ENCODE measurements at regions of chr6 and their contacts with region 1.

Region 1: GRCh38 chr6:31619805-31620585 is 520 bp upstream of the PRRC2A start:
- DNase-seq: peak; percentile 98
- ATAC-seq: peak; percentile 82
- H3K4me3 Mint-ChIP-seq: peak overlapping the region; percentile 95
- H3K27ac Mint-ChIP-seq: peak overlapping the region; percentile 97
- H3K4me1 Mint-ChIP-seq: peaks cover 52% of the 10 kb centered on the region
- H3K27me3 Mint-ChIP-seq: no peaks in the 10 kb centered on the region

Region 2: GRCh38 chr6:31426395-31427354 is 193.3 kb before region 1 on chr6:
- CTCF ChIA-PET with region 1: no interaction called
- POLR2A ChIA-PET with region 1: no interaction called
- intact Hi-C with region 1: no loop called
- DNase-seq: no peak
- ATAC-seq: no peak
- H3K4me3 Mint-ChIP-seq: no peak overlapping the region
- H3K27ac Mint-ChIP-seq: no peak overlapping the region
- H3K4me1 Mint-ChIP-seq: no peaks in the 10 kb centered on the region
- H3K27me3 Mint-ChIP-seq: peaks cover 2% of the 10 kb centered on the region

Region 3: DNA sequence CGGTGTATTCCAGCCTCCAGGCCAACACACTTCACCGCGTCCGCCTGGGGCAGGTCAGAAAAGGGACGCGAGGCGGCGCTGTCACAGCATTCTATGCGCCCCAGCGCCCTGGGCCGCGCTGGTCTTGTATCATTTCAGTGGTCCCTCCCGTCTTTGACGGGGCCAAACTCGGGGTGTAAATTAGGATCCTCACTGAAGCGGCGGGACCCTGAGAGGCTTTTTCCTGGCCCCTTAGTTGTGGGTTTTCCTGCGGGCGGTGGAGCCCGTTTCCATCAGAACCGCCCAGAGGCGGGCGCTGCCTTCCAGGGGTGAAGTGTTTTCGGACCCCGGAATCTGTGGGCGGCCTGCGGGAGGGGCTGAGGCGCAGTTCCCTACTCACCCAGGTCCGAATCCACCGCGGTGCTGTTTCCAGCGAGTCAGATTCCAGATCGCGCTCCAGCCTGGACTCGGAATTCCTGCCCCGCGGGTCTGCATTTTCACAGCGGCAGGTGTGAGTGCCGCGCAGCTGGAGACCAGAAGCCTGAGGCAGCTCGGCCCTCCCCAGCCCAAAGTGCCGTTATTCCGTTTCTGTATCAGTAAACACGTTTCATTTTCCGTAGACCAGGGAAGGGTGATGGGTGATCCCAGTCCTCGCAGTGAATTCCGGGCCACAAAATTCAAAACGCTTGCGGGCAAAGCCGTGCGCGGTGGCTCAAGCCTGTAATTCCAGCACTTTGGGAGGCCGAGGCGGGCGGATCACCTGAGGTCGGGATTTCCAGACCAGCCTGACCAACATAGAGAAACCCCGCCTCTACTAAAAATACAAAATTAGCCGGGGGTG is 125.9 kb before region 1 on chr6:
- CTCF ChIA-PET with region 1: interaction called, 3 read pairs
- POLR2A ChIA-PET with region 1: no interaction called
- intact Hi-C with region 1: loop called in 1 of 2 experiments (anchors 1 kb)
- DNase-seq: peak; percentile 91
- ATAC-seq: peak; percentile 58
- H3K4me3 Mint-ChIP-seq: peak overlapping the region; percentile 79
- H3K27ac Mint-ChIP-seq: peak overlapping the region; percentile 90
- H3K4me1 Mint-ChIP-seq: peaks cover 43% of the 10 kb centered on the region
- H3K27me3 Mint-ChIP-seq: no peaks in the 10 kb centered on the region

Region 4: GRCh38 chr6:31597006-31597405 is 23.0 kb before region 1 on chr6:
- CTCF ChIA-PET with region 1: interaction called, 22 read pairs
- POLR2A ChIA-PET with region 1: interaction called, 4 read pairs
- intact Hi-C with region 1: no loop called
- DNase-seq: peak; percentile 61
- ATAC-seq: peak; percentile 78
- H3K4me3 Mint-ChIP-seq: no peak overlapping the region
- H3K27ac Mint-ChIP-seq: no peak overlapping the region
- H3K4me1 Mint-ChIP-seq: peaks cover 46% of the 10 kb centered on the region
- H3K27me3 Mint-ChIP-seq: no peaks in the 10 kb centered on the region

Region 5: GRCh38 chr6:31665501-31666336 is 45.7 kb after region 1 on chr6 and contains the start of gene CSNK2B:
- CTCF ChIA-PET with region 1: no interaction called
- POLR2A ChIA-PET with region 1: interaction called, 4 read pairs
- intact Hi-C with region 1: loop called (anchors 1 kb)
- DNase-seq: peak; percentile 99
- ATAC-seq: peak; percentile 89
- H3K4me3 Mint-ChIP-seq: peak within 1 kb of the TSS; percentile 99
- H3K27ac Mint-ChIP-seq: peak within 1 kb of the TSS; percentile 99
- H3K4me1 Mint-ChIP-seq: peaks cover 66% of the 10 kb centered on the region
- H3K27me3 Mint-ChIP-seq: no peaks in the 10 kb centered on the region
- total RNA-seq, gene CSNK2B: 239 to 346 TPM

Region 6: GRCh38 chr6:31697555-31697954 is 77.6 kb after region 1 on chr6:
- CTCF ChIA-PET with region 1: no interaction called
- POLR2A ChIA-PET with region 1: no interaction called
- intact Hi-C with region 1: no loop called
- DNase-seq: peak; percentile 34
- ATAC-seq: peak; percentile 70
- H3K4me3 Mint-ChIP-seq: no peak overlapping the region
- H3K27ac Mint-ChIP-seq: peak overlapping the region; percentile 80
- H3K4me1 Mint-ChIP-seq: peaks cover 30% of the 10 kb centered on the region
- H3K27me3 Mint-ChIP-seq: no peaks in the 10 kb centered on the region

Region 7: GRCh38 chr6:31834434-31835198 is 214.6 kb after region 1 on chr6:
- CTCF ChIA-PET with region 1: no interaction called
- POLR2A ChIA-PET with region 1: interaction called, 4 read pairs
- intact Hi-C with region 1: loop called in 1 of 2 experiments (anchors 2 kb)
- DNase-seq: peak; percentile 85
- ATAC-seq: peak; percentile 63
- H3K4me3 Mint-ChIP-seq: peak overlapping the region; percentile 90
- H3K27ac Mint-ChIP-seq: peak overlapping the region; percentile 95
- H3K4me1 Mint-ChIP-seq: peaks cover 40% of the 10 kb centered on the region
- H3K27me3 Mint-ChIP-seq: no peaks in the 10 kb centered on the region

Region 8: GRCh38 chr6:31971993-31972708 is 352.2 kb after region 1 on chr6 and contains the start of gene DXO:
- CTCF ChIA-PET with region 1: no interaction called
- POLR2A ChIA-PET with region 1: no interaction called
- intact Hi-C with region 1: loop called in 1 of 2 experiments (anchors 1 kb)
- DNase-seq: peak; percentile 99
- ATAC-seq: peak; percentile 96
- H3K4me3 Mint-ChIP-seq: peak within 1 kb of the TSS; percentile 96
- H3K27ac Mint-ChIP-seq: peak within 1 kb of the TSS; percentile 99
- H3K4me1 Mint-ChIP-seq: peaks cover 43% of the 10 kb centered on the region
- H3K27me3 Mint-ChIP-seq: no peaks in the 10 kb centered on the region
- total RNA-seq, gene DXO: 12.6 to 13.9 TPM